CD8-positive, alpha-beta T cell (primary cell): ENCODE measurements at regions of chr2 and their contacts with region 1.

Region 1: GRCh38 chr2:230614913-230615332 is 97.7 kb upstream of the CAB39 start:
- DNase-seq: peak in 2 of 9 experiments; percentile 33 to 35
- ATAC-seq: no peak
- H3K4me3 ChIP-seq: no peak overlapping the region
- H3K4me3 Mint-ChIP-seq: no peak overlapping the region
- H3K27ac ChIP-seq: no peak overlapping the region
- H3K27ac Mint-ChIP-seq: no peak overlapping the region
- H3K4me1 ChIP-seq: peaks cover 15% of the 10 kb centered on the region
- H3K4me1 Mint-ChIP-seq: peaks cover 22% of the 10 kb centered on the region
- H3K27me3 ChIP-seq: no peaks in the 10 kb centered on the region
- H3K27me3 Mint-ChIP-seq: no peaks in the 10 kb centered on the region
- CTCF ChIP-seq: no peak

Region 2: GRCh38 chr2:229800997-229801754 is 813.7 kb before region 1 on chr2:
- CTCF ChIA-PET with region 1: interaction called, 6 read pairs
- POLR2A ChIA-PET with region 1: no interaction called
- intact Hi-C with region 1: loop called in 1 of 2 experiments (anchors 2 kb)
- DNase-seq: peak; percentile 48 to 82 (median 75)
- ATAC-seq: peak; percentile 77
- H3K4me3 ChIP-seq: no peak overlapping the region
- H3K4me3 Mint-ChIP-seq: no peak overlapping the region
- H3K27ac ChIP-seq: no peak overlapping the region
- H3K27ac Mint-ChIP-seq: no peak overlapping the region
- H3K4me1 ChIP-seq: no peaks in the 10 kb centered on the region
- H3K4me1 Mint-ChIP-seq: no peaks in the 10 kb centered on the region
- H3K27me3 ChIP-seq: no peaks in the 10 kb centered on the region
- H3K27me3 Mint-ChIP-seq: no peaks in the 10 kb centered on the region
- CTCF ChIP-seq: peak; percentile 87

Region 3: GRCh38 chr2:230068016-230068650 is 546.8 kb before region 1 on chr2:
- CTCF ChIA-PET with region 1: no interaction called
- POLR2A ChIA-PET with region 1: no interaction called
- intact Hi-C with region 1: loop called in 1 of 2 experiments (anchors 5 kb)
- DNase-seq: peak; percentile 7 to 69 (median 39)
- ATAC-seq: peak; percentile 24
- H3K4me3 ChIP-seq: peak overlapping the region; percentile 50 to 63
- H3K4me3 Mint-ChIP-seq: peak overlapping the region; percentile 80
- H3K27ac ChIP-seq: no peak overlapping the region
- H3K27ac Mint-ChIP-seq: no peak overlapping the region
- H3K4me1 ChIP-seq: no peaks in the 10 kb centered on the region
- H3K4me1 Mint-ChIP-seq: peaks cover 15% of the 10 kb centered on the region
- H3K27me3 ChIP-seq: no peaks in the 10 kb centered on the region
- H3K27me3 Mint-ChIP-seq: peaks cover 27% of the 10 kb centered on the region
- CTCF ChIP-seq: peak; percentile 8

Region 4: DNA sequence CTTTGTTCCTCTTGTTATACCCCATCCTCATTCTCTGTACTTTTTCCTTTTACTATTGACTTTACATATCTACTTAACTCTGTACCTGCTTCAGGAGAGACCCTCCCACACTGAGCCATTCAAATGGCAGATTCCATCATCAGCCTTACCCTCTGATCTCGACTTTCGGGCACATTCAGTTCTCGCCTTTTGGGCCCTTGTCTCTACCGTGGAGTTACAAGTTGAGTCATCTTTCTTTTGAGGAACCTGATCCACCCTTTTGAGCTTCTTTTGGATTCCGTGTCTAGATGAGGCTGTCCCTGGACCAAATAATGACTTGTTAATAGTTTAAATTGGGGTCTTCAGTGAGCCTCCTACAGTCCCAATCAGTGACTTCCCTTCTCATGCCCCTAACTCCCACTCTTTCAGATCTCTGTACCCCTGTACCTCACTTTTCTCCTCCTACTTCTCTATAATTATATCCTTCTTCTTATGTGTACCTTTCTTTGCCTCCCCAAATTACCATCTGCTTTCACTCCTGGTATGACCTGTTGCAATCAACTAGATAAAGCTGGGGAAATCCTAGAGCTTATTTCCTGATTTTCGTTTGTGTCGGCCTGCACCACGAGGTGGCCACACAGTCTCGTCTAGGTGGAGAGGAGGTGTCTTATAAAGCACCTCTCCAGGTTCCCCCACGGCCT is 412.4 kb before region 1 on chr2:
- CTCF ChIA-PET with region 1: no interaction called
- POLR2A ChIA-PET with region 1: no interaction called
- intact Hi-C with region 1: loop called in 1 of 2 experiments (anchors 5 kb)
- DNase-seq: peak in 2 of 9 experiments; percentile 26 to 36
- ATAC-seq: no peak
- H3K4me3 ChIP-seq: no peak overlapping the region
- H3K4me3 Mint-ChIP-seq: no peak overlapping the region
- H3K27ac ChIP-seq: no peak overlapping the region
- H3K27ac Mint-ChIP-seq: peak overlapping the region; percentile 68
- H3K4me1 ChIP-seq: no peaks in the 10 kb centered on the region
- H3K4me1 Mint-ChIP-seq: peaks cover 21% of the 10 kb centered on the region
- H3K27me3 ChIP-seq: no peaks in the 10 kb centered on the region
- H3K27me3 Mint-ChIP-seq: no peaks in the 10 kb centered on the region
- CTCF ChIP-seq: no peak

Region 5: GRCh38 chr2:230411570-230412370 is 203.2 kb before region 1 on chr2:
- CTCF ChIA-PET with region 1: no interaction called
- POLR2A ChIA-PET with region 1: no interaction called
- intact Hi-C with region 1: loop called (anchors 2 to 5 kb)
- DNase-seq: peak in 8 of 9 experiments; percentile 37 to 83 (median 59)
- ATAC-seq: peak; percentile 67
- H3K4me3 ChIP-seq: peak overlapping the region; percentile 88 to 92
- H3K4me3 Mint-ChIP-seq: peak overlapping the region; percentile 100
- H3K27ac ChIP-seq: peak overlapping the region; percentile 83 to 92
- H3K27ac Mint-ChIP-seq: peak overlapping the region; percentile 100
- H3K4me1 ChIP-seq: peaks cover 53% of the 10 kb centered on the region
- H3K4me1 Mint-ChIP-seq: peaks cover 81% of the 10 kb centered on the region
- H3K27me3 ChIP-seq: no peaks in the 10 kb centered on the region
- H3K27me3 Mint-ChIP-seq: no peaks in the 10 kb centered on the region
- CTCF ChIP-seq: no peak

Region 6: DNA sequence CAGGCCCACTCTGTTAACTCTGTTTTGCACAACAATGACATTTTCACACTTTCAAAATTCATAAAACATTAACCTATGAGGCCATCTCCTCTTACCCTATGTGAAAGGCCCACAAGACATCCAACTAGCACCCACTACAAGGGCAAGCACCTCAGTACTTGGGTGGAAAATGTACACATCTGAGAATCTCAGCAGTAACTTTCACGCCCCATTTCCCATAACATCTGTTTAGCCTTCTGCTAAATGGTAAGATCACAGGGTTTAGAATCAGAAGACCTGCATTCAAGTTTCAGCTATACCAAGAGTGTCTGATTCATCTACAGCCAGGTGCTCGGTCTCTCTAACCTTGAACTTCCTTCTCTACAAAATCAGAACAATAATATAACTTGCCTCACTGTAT is 109.8 kb before region 1 on chr2:
- CTCF ChIA-PET with region 1: no interaction called
- POLR2A ChIA-PET with region 1: no interaction called
- intact Hi-C with region 1: loop called in 1 of 2 experiments (anchors 10 kb)
- DNase-seq: no peak
- ATAC-seq: no peak
- H3K4me3 ChIP-seq: no peak overlapping the region
- H3K4me3 Mint-ChIP-seq: no peak overlapping the region
- H3K27ac ChIP-seq: no peak overlapping the region
- H3K27ac Mint-ChIP-seq: no peak overlapping the region
- H3K4me1 ChIP-seq: no peaks in the 10 kb centered on the region
- H3K4me1 Mint-ChIP-seq: peaks cover 2% of the 10 kb centered on the region
- H3K27me3 ChIP-seq: no peaks in the 10 kb centered on the region
- H3K27me3 Mint-ChIP-seq: no peaks in the 10 kb centered on the region
- CTCF ChIP-seq: no peak